H1 (cell line): ENCODE measurements at regions of chr3 and their contacts with region 1.

Region 1: DNA sequence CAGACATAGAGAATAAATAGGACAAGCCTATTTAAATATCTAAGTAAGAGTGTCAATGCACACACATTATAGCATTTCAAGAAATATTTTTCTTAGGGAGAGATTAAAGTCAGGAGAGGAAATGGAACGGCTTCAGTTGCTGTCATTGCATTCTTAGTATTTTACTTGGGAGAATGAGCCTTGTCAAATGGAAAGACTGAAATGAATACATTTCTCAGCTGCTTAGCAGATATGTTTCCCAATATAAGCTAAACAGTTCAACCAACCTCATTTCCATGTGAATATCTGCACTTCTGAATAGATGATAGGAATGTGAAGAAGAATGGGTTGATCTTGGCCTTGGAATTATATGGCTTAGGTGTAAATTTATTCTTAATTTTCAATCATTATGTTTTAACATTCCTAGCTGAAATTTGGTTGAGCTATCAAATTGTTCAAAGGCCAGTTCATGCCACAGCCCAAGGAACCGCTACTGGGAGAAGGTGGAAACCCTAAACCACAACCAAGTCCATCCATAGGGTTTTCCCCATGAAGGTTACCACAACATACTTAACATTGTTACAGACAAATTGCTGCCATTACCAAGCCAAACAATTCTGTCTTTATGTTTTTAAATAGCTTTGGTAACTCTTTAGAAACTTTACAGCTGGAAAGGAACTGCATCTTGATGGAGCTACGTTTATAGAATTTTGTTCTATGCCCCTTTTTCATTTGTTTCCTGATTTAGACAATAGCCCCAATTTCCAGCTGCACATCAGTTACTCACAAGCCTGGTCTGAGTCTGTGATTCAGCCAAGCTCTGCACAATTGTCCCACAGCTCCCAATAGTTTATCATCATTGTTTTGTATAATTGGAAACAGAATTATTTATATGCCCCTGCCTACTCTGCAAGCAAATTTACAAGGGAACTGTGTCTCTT is 459.6 kb downstream of the MECOM start:
- DNase-seq: no peak
- H3K4me3 ChIP-seq: no peak overlapping the region
- H3K27ac ChIP-seq: no peak overlapping the region
- H3K4me1 ChIP-seq: no peaks in the 10 kb centered on the region
- H3K27me3 ChIP-seq: no peaks in the 10 kb centered on the region
- CTCF ChIP-seq: no peak
- EP300 ChIP-seq: no peak
- POLR2A ChIP-seq: no peak
- RAD21 ChIP-seq: no peak

Region 2: GRCh38 chr3:169218314-169218983 is 14.6 kb after region 1 on chr3:
- CTCF ChIA-PET with region 1: interaction called, 12 read pairs
- POLR2A ChIA-PET with region 1: no interaction called
- DNase-seq: peak in 1 of 2 experiments; percentile 50
- H3K4me3 ChIP-seq: no peak overlapping the region
- H3K27ac ChIP-seq: no peak overlapping the region
- H3K4me1 ChIP-seq: no peaks in the 10 kb centered on the region
- H3K27me3 ChIP-seq: no peaks in the 10 kb centered on the region
- CTCF ChIP-seq: peak; percentile 38 to 77 (median 51)
- EP300 ChIP-seq: no peak
- POLR2A ChIP-seq: no peak
- RAD21 ChIP-seq: peak; percentile 79 to 80